Posterior vena cava (tissue), 2 donors: ENCODE measurements at regions of chr2 and their contacts with region 1.

Region 1: DNA sequence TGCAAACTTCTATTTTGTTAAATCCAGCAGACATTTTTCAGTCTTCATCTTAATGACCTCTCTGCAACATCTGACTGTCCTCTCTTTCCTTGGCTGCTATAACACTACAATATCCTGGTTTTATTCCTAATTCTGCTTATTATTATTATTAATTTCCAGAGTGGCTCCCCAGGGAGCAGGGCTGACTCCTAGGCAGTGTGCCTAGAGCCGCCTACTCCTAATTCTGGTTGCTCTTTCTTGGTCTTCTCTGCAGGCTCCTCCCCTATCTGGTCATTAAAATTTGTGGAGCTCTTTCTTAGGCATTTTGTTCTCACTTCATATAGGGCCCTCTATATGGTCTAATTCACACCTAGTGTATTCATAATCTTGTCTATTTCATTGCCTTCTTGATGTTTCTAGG is 10.8 kb downstream of the LOXL3 start:
- DNase-seq: no peak

Region 2: DNA sequence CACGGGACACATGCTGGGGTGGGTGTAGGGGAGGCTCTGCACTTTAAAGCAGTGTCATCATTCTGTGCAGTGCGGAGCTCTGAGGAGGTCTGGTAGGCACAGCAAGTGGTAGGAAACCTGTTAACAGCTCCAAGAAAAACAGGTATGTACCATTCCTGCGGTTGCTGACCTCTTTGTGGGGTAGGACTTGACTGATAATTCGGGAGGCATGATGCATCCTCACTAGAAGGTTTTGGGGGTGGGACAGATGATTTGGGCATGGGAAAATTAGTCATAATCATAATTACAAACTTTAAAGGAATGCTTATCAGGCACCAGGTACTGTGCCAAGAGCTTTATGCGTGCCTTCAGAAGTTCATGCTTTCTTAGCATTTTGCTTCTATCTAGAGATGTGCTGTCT is 21.2 kb after region 1 on chr2:
- intact Hi-C with region 1: loop called in 1 of 2 experiments (anchors 1 kb)
- DNase-seq: no peak